ENCODE measurements at regions of chr15 and their contacts with region 1.

Region 1: GRCh38 chr15:85296615-85297402 is 83.6 kb upstream of the AKAP13 start:
- DNase-seq: peak; percentile 38 to 63 (median 61)
- H3K4me3 ChIP-seq: no peak overlapping the region
- H3K4me3 Mint-ChIP-seq: peak overlapping the region; percentile 50 to 79
- H3K27ac ChIP-seq: no peak overlapping the region
- H3K27ac Mint-ChIP-seq: peak overlapping the region in 2 of 7 donors; percentile 30 to 81
- H3K4me1 ChIP-seq: peaks cover 4 to 9% of the 10 kb centered on the region in 2 donors
- H3K4me1 Mint-ChIP-seq: peaks cover 14% of the 10 kb centered on the region
- H3K27me3 ChIP-seq: no peaks in the 10 kb centered on the region
- H3K27me3 Mint-ChIP-seq: peaks cover 0 to 2% (median 0%) of the 10 kb centered on the region in 3 donors
- CTCF ChIP-seq: peak; percentile 59

Region 2: GRCh38 chr15:85312486-85312885 is 15.7 kb after region 1 on chr15:
- intact Hi-C with region 1: no loop called
- DNase-seq: peak; percentile 33 to 79 (median 51)
- H3K4me3 ChIP-seq: peak overlapping the region in 1 of 3 experiments; percentile 34
- H3K4me3 Mint-ChIP-seq: peak overlapping the region; percentile 67 to 69
- H3K27ac ChIP-seq: peak overlapping the region in 1 of 2 donors; percentile 70
- H3K27ac Mint-ChIP-seq: peak overlapping the region; percentile 65 to 92 (median 86)
- H3K4me1 ChIP-seq: peaks cover 13 to 16% of the 10 kb centered on the region in 2 donors
- H3K4me1 Mint-ChIP-seq: peaks cover 29% of the 10 kb centered on the region
- H3K27me3 ChIP-seq: no peaks in the 10 kb centered on the region
- H3K27me3 Mint-ChIP-seq: peaks cover 0 to 2% (median 0%) of the 10 kb centered on the region in 3 donors
- CTCF ChIP-seq: no peak

Region 3: DNA sequence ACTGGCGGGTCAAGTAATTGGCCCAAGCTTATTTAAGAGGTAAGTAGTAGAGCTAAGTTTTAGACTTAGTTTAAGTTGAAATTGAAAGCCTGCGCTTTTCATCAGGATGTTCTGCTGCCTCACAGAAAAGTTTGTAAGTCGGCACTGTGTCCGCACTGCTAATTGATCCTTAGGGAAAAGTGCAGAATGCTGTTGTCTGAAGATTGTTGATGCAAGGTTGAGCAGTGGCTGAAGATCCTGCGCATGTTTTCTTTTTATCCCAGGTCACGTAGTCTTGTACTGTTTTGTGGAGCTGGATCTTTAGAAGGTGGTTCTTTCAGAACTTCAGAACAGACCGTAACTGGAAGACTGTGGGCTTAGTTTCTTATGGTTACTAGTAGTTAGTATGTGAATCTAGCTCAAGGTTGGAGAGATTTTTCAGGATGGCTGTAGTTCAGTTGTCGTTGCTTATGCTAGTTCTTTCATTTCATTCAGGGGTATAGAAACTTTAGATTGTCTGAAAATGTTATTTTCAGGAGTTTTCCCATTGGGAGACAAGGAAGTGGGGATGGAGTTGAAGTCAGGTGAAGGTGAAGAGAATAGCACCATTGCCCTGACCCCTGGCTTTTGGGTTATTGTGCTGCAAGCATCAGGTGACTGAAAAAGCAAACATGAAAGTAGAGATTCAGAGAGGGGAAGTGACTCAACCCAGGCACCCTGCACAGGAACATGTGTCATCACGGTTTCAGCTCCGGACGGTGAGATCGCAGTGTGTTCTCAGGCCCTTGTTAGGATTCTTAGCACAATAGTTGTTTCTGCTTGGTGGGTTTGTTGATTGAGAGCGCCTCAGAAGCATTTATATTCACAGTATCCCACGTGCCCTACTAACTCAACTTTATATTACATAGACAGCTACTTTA is 116.4 kb after region 1 on chr15:
- intact Hi-C with region 1: loop called (anchors 5 to 10 kb)
- DNase-seq: peak; percentile 87 to 95 (median 91)
- H3K4me3 ChIP-seq: no peak overlapping the region
- H3K4me3 Mint-ChIP-seq: no peak overlapping the region
- H3K27ac ChIP-seq: peak overlapping the region in 1 of 2 donors; percentile 75
- H3K27ac Mint-ChIP-seq: peak overlapping the region; percentile 47 to 90 (median 82)
- H3K4me1 ChIP-seq: peaks cover 19 to 37% of the 10 kb centered on the region in 2 donors
- H3K4me1 Mint-ChIP-seq: peaks cover 31% of the 10 kb centered on the region
- H3K27me3 ChIP-seq: no peaks in the 10 kb centered on the region
- H3K27me3 Mint-ChIP-seq: no peaks in the 10 kb centered on the region
- CTCF ChIP-seq: no peak

Region 4: GRCh38 chr15:85421116-85421925 is 124.5 kb after region 1 on chr15:
- intact Hi-C with region 1: loop called (anchors 5 to 10 kb)
- DNase-seq: no peak
- H3K4me3 ChIP-seq: no peak overlapping the region
- H3K4me3 Mint-ChIP-seq: no peak overlapping the region
- H3K27ac ChIP-seq: no peak overlapping the region
- H3K27ac Mint-ChIP-seq: no peak overlapping the region
- H3K4me1 ChIP-seq: no peaks in the 10 kb centered on the region
- H3K4me1 Mint-ChIP-seq: peaks cover 10% of the 10 kb centered on the region
- H3K27me3 ChIP-seq: no peaks in the 10 kb centered on the region
- H3K27me3 Mint-ChIP-seq: no peaks in the 10 kb centered on the region
- CTCF ChIP-seq: no peak

Region 5: DNA sequence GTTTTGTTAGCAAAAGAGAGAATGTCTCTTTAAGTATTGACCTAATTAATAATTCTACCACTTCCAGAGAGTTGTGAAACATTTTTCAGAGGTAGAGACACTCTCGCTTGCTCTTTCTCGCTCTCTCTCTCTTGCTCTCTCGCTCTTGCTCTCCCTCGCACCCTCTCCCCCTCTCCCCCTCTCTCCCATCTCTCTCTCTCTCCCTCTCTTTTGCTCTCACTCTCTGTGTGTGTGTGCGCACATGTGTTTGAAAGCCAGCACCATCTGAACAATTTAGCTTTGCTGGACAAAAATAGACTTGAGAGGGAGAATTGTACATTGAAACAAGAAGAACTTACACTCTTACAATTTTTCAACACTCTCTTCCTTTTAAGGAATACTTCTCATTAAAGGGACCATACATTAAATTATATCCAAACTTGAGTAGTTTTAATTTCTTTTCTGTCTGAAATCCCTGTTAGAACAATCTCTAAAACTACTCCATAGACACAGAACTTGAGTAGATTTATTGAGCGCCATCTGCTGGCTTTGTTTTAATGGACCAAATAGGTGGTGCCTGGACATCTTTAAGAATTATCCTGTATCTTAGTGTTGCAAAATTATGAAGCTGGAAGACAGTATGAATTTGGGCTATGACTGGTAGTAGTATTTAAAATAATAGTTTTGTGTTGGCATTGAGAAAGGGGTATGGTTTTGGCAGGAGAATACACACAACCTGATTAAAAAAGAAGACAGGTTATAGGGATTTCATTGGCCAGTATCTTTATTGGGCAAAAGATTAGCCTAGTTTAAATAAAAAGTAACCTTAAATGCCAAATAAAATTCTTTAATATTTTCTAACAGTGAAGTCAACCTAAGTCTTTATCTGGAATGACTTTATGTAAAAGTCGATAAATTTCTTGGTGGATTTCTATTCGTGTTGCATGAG is 208.2 kb after region 1 on chr15:
- intact Hi-C with region 1: loop called in 1 of 2 experiments (anchors 10 kb)
- DNase-seq: peak; percentile 29 to 66 (median 51)
- H3K4me3 ChIP-seq: peak overlapping the region in 1 of 3 experiments; percentile 25
- H3K4me3 Mint-ChIP-seq: peak overlapping the region in 1 of 2 donors; percentile 37
- H3K27ac ChIP-seq: peak overlapping the region in 1 of 2 donors; percentile 44
- H3K27ac Mint-ChIP-seq: peak overlapping the region in 3 of 7 donors; percentile 40 to 90 (median 78)
- H3K4me1 ChIP-seq: peaks cover 19 to 26% of the 10 kb centered on the region in 2 donors
- H3K4me1 Mint-ChIP-seq: peaks cover 36% of the 10 kb centered on the region
- H3K27me3 ChIP-seq: no peaks in the 10 kb centered on the region
- H3K27me3 Mint-ChIP-seq: no peaks in the 10 kb centered on the region
- CTCF ChIP-seq: peak; percentile 76